ENCODE measurements at regions of chr7 and their contacts with region 1.

Region 1: DNA sequence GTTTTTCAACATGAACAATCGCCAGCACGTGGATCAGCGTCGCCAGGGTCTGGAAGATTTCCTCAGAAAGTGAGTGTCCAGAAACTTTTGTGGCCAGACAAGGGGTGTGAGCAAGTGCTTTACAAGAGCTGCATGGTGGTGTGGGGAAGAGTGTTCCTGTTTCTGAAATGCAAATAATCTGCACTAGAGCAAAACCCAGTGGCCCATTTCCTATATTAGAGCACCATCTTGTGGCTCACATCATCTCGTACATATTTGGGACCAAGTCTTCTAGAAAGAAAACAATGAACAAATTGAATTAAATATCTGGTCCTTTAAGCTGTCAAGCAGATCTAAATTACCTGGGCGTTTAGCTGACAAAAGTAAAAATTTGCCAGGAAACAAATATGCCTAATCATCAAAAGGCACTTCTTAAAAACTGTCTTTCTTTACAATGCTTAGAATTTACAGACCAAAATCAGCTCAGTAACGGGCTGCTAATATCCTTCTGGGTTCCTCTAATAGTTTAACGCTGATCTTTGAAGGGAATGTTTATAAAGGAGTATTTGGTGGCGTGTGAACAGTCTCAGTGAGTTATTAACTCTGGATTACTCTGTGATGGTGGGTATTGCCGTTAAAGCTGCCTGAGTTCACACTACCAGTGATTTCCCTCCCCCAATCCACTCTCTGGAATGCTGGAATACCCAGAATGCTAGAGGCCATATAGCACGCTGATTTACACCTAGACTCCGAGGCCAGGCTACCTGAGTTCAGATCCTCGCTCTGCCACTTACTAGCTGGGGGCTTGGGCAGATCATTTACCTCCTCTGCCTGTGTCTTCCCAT is 73.6 kb downstream of the SNX10 start:
- DNase-seq: peak in 7 of 9 donors; percentile 51 to 77 (median 69)
- ATAC-seq: peak; percentile 88
- H3K4me3 ChIP-seq: no peak overlapping the region
- H3K4me3 Mint-ChIP-seq: no peak overlapping the region
- H3K27ac ChIP-seq: no peak overlapping the region
- H3K27ac Mint-ChIP-seq: peak overlapping the region in 1 of 9 donors; percentile 28
- H3K4me1 ChIP-seq: peaks cover 0 to 8% of the 10 kb centered on the region in 2 donors
- H3K4me1 Mint-ChIP-seq: peaks cover 3 to 16% (median 8%) of the 10 kb centered on the region in 7 donors
- H3K27me3 ChIP-seq: no peaks in the 10 kb centered on the region
- H3K27me3 Mint-ChIP-seq: peaks cover 0 to 4% (median 0%) of the 10 kb centered on the region in 5 donors

Region 2: GRCh38 chr7:25636871-25637283 is 728.4 kb before region 1 on chr7:
- CTCF ChIA-PET with region 1: no interaction called
- POLR2A ChIA-PET with region 1: no interaction called
- intact Hi-C with region 1: no loop called
- DNase-seq: no peak
- ATAC-seq: no peak
- H3K4me3 ChIP-seq: no peak overlapping the region
- H3K4me3 Mint-ChIP-seq: no peak overlapping the region
- H3K27ac ChIP-seq: no peak overlapping the region
- H3K27ac Mint-ChIP-seq: no peak overlapping the region
- H3K4me1 ChIP-seq: no peaks in the 10 kb centered on the region
- H3K4me1 Mint-ChIP-seq: peaks cover 0 to 2% (median 0%) of the 10 kb centered on the region in 7 donors
- H3K27me3 ChIP-seq: no peaks in the 10 kb centered on the region
- H3K27me3 Mint-ChIP-seq: peaks cover 0 to 5% (median 0%) of the 10 kb centered on the region in 5 donors

Region 3: DNA sequence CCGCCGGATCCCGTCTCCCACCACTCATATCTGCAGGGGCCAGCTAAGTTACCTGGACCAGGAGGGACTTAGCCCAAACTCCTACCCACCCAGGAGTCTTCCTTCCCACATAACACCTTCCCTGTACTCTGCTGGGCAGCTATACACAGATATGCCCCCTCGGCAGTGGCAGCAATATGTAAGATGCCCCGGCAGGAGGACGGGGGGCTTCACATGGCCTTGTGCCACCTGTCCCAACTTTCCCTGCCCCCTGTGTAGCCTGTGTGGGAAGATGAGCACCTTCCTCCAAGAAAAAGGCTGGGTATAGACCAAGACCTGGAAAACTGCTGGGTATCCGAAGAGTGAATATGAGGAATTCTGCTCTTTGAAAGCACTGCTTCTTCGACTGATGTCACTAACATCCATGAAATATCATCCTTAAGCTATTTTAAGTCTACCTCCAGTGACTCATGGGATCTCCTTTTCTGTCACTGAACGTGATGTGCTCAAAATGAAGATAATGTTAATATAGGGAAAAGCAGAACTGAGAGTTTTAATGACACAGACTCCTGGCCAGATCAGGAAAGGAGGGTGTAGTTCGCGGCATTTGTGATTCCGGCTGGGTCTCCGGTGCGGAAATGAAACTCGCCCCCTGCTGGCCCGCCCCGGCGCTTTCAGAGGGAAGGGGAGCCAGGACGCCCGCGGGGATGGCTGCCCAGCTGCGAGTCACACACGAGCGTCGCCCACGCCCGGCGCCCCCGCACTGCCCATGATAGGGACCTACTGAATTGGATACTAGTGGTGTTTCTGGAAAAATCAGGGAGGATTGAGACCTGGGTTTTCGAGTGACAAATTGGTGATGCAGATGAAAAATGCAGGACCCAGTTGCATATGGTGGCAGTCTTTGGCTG is 470.1 kb before region 1 on chr7:
- CTCF ChIA-PET with region 1: interaction called, 127 read pairs
- POLR2A ChIA-PET with region 1: interaction called, 8 read pairs
- intact Hi-C with region 1: loop called (anchors 1 kb)
- DNase-seq: peak; percentile 37 to 66 (median 52)
- ATAC-seq: peak; percentile 84
- H3K4me3 ChIP-seq: peak overlapping the region; percentile 46
- H3K4me3 Mint-ChIP-seq: peak overlapping the region; percentile 48 to 93 (median 77)
- H3K27ac ChIP-seq: no peak overlapping the region
- H3K27ac Mint-ChIP-seq: peak overlapping the region in 4 of 9 donors; percentile 9 to 71 (median 38)
- H3K4me1 ChIP-seq: peaks cover 9 to 13% of the 10 kb centered on the region in 2 donors
- H3K4me1 Mint-ChIP-seq: peaks cover 13 to 29% (median 27%) of the 10 kb centered on the region in 7 donors
- H3K27me3 ChIP-seq: no peaks in the 10 kb centered on the region
- H3K27me3 Mint-ChIP-seq: peaks cover 7 to 37% (median 15%) of the 10 kb centered on the region in 5 donors

Region 4: GRCh38 chr7:26078437-26079336 is 286.6 kb before region 1 on chr7:
- CTCF ChIA-PET with region 1: interaction called, 58 read pairs
- POLR2A ChIA-PET with region 1: interaction called, 4 read pairs
- intact Hi-C with region 1: loop called (anchors 1 kb)
- DNase-seq: peak; percentile 68 to 86 (median 80)
- ATAC-seq: peak; percentile 99
- H3K4me3 ChIP-seq: no peak overlapping the region
- H3K4me3 Mint-ChIP-seq: peak overlapping the region in 7 of 10 donors; percentile 30 to 68 (median 51)
- H3K27ac ChIP-seq: no peak overlapping the region
- H3K27ac Mint-ChIP-seq: no peak overlapping the region
- H3K4me1 ChIP-seq: peaks cover 0 to 10% of the 10 kb centered on the region in 2 donors
- H3K4me1 Mint-ChIP-seq: peaks cover 0 to 10% (median 6%) of the 10 kb centered on the region in 7 donors
- H3K27me3 ChIP-seq: peaks cover 0 to 6% of the 10 kb centered on the region in 2 donors
- H3K27me3 Mint-ChIP-seq: peaks cover 15 to 84% (median 33%) of the 10 kb centered on the region in 5 donors

Region 5: GRCh38 chr7:26278770-26279169 is 86.5 kb before region 1 on chr7:
- CTCF ChIA-PET with region 1: interaction called, 6 read pairs
- POLR2A ChIA-PET with region 1: no interaction called
- intact Hi-C with region 1: loop called (anchors 1 kb)
- DNase-seq: no peak
- ATAC-seq: peak; percentile 69
- H3K4me3 ChIP-seq: no peak overlapping the region
- H3K4me3 Mint-ChIP-seq: peak overlapping the region in 1 of 10 donors; percentile 50
- H3K27ac ChIP-seq: no peak overlapping the region
- H3K27ac Mint-ChIP-seq: no peak overlapping the region
- H3K4me1 ChIP-seq: no peaks in the 10 kb centered on the region
- H3K4me1 Mint-ChIP-seq: peaks cover 0 to 18% (median 12%) of the 10 kb centered on the region in 7 donors
- H3K27me3 ChIP-seq: no peaks in the 10 kb centered on the region
- H3K27me3 Mint-ChIP-seq: peaks cover 0 to 2% (median 0%) of the 10 kb centered on the region in 5 donors

Region 6: GRCh38 chr7:26381476-26382353 is 16.4 kb after region 1 on chr7:
- CTCF ChIA-PET with region 1: interaction called, 10 read pairs
- POLR2A ChIA-PET with region 1: no interaction called
- intact Hi-C with region 1: no loop called
- DNase-seq: no peak
- ATAC-seq: no peak
- H3K4me3 ChIP-seq: no peak overlapping the region
- H3K4me3 Mint-ChIP-seq: no peak overlapping the region
- H3K27ac ChIP-seq: no peak overlapping the region
- H3K27ac Mint-ChIP-seq: no peak overlapping the region
- H3K4me1 ChIP-seq: no peaks in the 10 kb centered on the region
- H3K4me1 Mint-ChIP-seq: peaks cover 0 to 6% (median 3%) of the 10 kb centered on the region in 7 donors
- H3K27me3 ChIP-seq: no peaks in the 10 kb centered on the region
- H3K27me3 Mint-ChIP-seq: peaks cover 28 to 50% (median 37%) of the 10 kb centered on the region in 5 donors

Region 7: DNA sequence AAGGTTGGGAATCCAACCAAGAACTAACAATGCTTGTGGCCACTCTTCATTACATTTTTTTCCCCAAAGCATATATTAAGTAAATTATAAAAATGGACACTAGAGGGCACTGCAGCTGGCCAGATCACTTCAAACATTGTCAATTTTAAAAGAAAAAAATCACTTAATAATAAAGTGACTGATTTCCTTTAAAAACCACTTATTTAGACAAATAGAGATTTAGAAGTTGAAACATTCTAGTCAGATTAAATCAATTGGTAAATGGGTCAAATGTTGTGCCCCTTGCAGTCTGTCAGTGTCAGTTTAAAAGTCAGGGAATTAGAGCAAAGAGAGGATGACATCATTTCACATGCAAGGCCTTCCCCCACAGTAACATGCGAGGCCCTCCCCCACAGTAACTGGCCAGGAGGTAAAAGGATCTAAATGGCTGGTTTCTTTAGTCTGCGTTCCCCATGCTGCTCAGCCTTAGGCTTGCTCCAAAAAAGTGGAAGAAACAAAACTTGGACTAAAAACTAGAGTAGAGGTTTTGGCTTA is 321.2 kb after region 1 on chr7:
- CTCF ChIA-PET with region 1: interaction called, 11 read pairs
- POLR2A ChIA-PET with region 1: no interaction called
- intact Hi-C with region 1: no loop called
- DNase-seq: peak in 7 of 9 donors; percentile 7 to 49 (median 30)
- ATAC-seq: peak; percentile 54
- H3K4me3 ChIP-seq: no peak overlapping the region
- H3K4me3 Mint-ChIP-seq: no peak overlapping the region
- H3K27ac ChIP-seq: no peak overlapping the region
- H3K27ac Mint-ChIP-seq: no peak overlapping the region
- H3K4me1 ChIP-seq: no peaks in the 10 kb centered on the region
- H3K4me1 Mint-ChIP-seq: peaks cover 0 to 1% (median 0%) of the 10 kb centered on the region in 7 donors
- H3K27me3 ChIP-seq: peaks cover 0 to 11% of the 10 kb centered on the region in 2 donors
- H3K27me3 Mint-ChIP-seq: peaks cover 38 to 67% (median 45%) of the 10 kb centered on the region in 5 donors